ENCODE measurements at regions of chr14 and their contacts with region 1.

Region 1: DNA sequence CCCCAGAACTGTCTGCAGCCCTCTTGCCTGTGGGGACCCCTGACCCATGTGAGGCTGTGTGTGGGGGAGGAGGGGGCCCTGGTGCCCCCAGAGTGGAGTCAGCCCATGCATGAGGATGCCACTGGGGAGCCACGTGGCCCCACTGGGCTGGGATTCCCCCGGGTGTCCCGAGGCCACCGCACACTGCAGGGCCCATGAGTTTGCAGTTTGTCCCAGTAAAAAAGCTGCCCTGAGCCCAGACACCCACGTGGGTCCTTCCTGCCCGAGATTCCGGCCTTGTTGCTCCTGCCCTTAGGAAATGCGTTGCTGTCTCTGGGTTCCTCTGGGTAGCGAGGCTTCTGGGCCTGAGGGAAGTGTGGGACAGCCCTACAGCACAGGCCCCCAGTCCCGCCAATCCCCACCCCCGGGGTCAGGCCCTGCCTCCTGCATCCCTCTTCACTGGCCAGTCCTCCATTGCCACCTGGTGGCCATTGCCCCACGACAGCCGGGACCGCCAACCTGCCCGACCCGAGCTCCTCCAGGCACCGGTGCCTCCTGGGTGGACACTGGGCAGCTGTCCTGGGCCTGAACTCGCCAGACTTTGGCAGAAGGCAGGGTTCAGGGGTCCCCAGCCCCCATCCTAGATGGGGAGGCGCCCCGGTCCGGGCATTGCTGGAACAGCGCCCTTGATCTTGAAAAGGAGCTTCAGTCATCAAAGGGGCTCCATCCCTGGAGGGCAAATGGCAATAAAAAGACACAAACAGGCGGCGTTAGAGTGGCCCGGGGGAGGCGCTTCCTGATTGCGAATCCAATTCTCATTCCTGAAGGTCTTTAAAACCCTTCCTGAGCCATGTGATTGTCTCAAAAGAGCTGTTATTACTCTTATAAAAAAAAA is 15.6 kb upstream of the C14orf180 start:
- DNase-seq: peak; percentile 85
- ATAC-seq: peak; percentile 76

Region 2: GRCh38 chr14:104078031-104078455 is 485.9 kb before region 1 on chr14:
- intact Hi-C with region 1: loop called (anchors 10 kb)
- DNase-seq: peak; percentile 90
- ATAC-seq: peak; percentile 91

Region 3: GRCh38 chr14:104137297-104138097 is 426.5 kb before region 1 on chr14:
- intact Hi-C with region 1: loop called (anchors 2 kb)
- DNase-seq: peak; percentile 75
- ATAC-seq: peak; percentile 80